Activated T-helper 1 cell treated with anti-CD3 and anti-CD28 coated beads, Interleukin-12 subunit alpha, Interleukin-12 subunit beta, Interleukin-2, Interleukin-4 antibody, amounts not matched to agents 30 ng/mL and 10 ng/mL and 1 ng/mL, durations not matched to agents 14 hours and 24 hours and 36 hours (primary cell): ENCODE measurements at regions of chr14 and their contacts with region 1.

Region 1: GRCh38 chr14:50231475-50232275 is at the start of gene SOS2:
- DNase-seq: peak; percentile 82
- H3K4me3 Mint-ChIP-seq: peak within 1 kb of the TSS; percentile 86
- H3K27ac Mint-ChIP-seq: peak within 1 kb of the TSS; percentile 89
- H3K4me1 Mint-ChIP-seq: peaks cover 44% of the 10 kb centered on the region
- H3K27me3 Mint-ChIP-seq: no peaks in the 10 kb centered on the region
- total RNA-seq, gene SOS2: 19.9 and 21.6 TPM in 2 replicates

Region 2: DNA sequence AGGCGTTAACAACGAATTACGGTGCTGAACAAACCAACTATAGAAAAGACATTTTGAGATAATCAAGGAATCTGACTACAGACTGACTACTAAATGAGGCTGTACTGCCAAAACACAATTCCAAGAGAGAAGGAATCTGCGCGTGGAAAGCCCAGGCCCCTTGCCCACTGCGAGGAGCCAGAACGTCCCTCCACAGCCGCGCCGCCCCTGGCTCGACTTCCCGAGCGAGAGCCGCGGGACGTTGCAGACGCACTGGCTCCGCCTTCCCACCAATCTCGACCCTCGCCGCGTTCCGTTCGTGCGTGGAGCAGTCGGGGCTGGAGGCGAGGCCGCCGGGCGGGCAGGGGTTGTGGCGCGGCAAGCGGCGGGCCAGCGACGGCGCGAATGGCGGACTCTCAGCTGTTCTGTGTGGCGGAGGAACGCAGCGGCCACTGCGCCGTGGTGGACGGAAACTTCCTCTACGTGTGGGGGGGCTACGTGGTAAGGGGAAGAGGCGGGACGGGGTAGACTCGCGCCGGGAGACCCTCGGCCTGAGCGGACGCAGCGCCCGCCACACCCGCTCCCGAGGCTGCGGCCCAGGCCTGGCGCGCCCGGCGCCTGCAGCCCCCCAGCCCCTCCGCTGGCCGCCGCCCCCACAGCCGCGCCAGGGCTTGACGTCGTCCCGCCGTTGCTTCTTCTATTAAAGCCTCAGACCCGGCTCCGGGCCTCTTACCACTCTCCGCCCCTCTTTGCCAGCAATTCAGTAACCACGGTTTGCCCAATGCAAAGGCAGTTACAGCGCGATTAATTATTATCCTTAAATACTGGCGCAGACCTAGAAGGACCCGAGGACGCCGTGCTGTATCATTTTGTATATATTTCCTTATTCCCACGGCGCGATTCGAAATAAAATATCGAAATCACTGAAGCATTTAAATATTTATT is 538.6 kb before region 1 on chr14 and contains the start of gene KLHDC1:
- intact Hi-C with region 1: loop called (anchors 2 kb)
- DNase-seq: peak; percentile 74
- H3K4me3 Mint-ChIP-seq: peak within 1 kb of the TSS; percentile 87
- H3K27ac Mint-ChIP-seq: peak within 1 kb of the TSS; percentile 94
- H3K4me1 Mint-ChIP-seq: peaks cover 19% of the 10 kb centered on the region
- H3K27me3 Mint-ChIP-seq: peaks cover 1% of the 10 kb centered on the region
- total RNA-seq, gene KLHDC1: 0.93 and 1.9 TPM in 2 replicates

Region 3: GRCh38 chr14:49892636-49893308 is 338.9 kb before region 1 on chr14 and contains the start of gene ARF6:
- intact Hi-C with region 1: loop called (anchors 2 kb)
- DNase-seq: peak; percentile 97
- H3K4me3 Mint-ChIP-seq: peak within 1 kb of the TSS; percentile 99
- H3K27ac Mint-ChIP-seq: peak within 1 kb of the TSS; percentile 100
- H3K4me1 Mint-ChIP-seq: peaks cover 19% of the 10 kb centered on the region
- H3K27me3 Mint-ChIP-seq: peaks cover 2% of the 10 kb centered on the region
- total RNA-seq, gene ARF6: 163 and 164 TPM in 2 replicates

Region 4: GRCh38 chr14:50116181-50116956 is 115.3 kb before region 1 on chr14 and contains the start of gene VCPKMT:
- intact Hi-C with region 1: loop called (anchors 1 kb)
- DNase-seq: peak; percentile 95
- H3K4me3 Mint-ChIP-seq: peak within 1 kb of the TSS; percentile 97
- H3K27ac Mint-ChIP-seq: peak within 1 kb of the TSS; percentile 98
- H3K4me1 Mint-ChIP-seq: peaks cover 33% of the 10 kb centered on the region
- H3K27me3 Mint-ChIP-seq: no peaks in the 10 kb centered on the region
- total RNA-seq, gene VCPKMT: 12.3 and 15.2 TPM in 2 replicates

Region 5: DNA sequence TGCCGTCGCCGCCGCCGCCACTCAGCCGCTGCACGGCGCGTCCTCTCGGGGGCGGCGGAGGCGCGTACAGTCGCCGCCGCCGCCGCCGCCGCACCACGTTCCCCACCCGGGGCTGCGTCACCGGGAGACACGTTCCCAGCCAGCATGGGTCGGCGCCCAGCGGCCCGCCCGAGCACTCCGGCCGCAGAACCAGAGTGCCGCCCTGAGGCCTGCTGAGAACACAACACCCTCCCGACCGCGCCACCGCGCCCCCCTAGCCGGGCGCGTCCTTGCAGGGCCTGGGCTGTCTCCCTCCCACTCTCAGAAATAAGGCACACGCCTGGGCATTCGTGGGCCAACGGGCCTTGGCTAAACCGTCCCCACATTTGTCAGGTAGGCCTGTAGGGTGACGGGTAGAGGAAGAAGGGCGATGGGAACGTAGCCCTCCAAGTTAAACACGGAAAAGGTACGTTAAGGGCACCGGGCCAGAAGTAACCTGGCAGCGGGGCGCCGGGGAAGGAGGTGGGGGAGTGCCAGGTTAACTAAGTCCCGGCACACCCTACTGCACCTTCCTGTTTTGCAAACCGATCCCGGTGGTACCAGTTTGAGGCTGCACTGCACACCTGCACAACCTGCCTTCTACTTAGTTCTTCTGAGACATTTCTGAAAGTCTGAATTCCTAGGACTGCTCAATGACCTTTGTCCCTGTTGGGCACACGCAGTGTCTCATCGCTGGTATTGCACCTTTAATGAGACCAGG is 301.0 kb after region 1 on chr14 and contains the start of gene MAP4K5:
- intact Hi-C with region 1: loop called (anchors 1 kb)
- DNase-seq: peak; percentile 82
- H3K4me3 Mint-ChIP-seq: peak within 1 kb of the TSS; percentile 92
- H3K27ac Mint-ChIP-seq: peak within 1 kb of the TSS; percentile 79
- H3K4me1 Mint-ChIP-seq: peaks cover 42% of the 10 kb centered on the region
- H3K27me3 Mint-ChIP-seq: peaks cover 24% of the 10 kb centered on the region
- total RNA-seq, gene MAP4K5: 26.4 and 27.5 TPM in 2 replicates